ENCODE measurements at regions of chr1 and their contacts with region 1.

Region 1: DNA sequence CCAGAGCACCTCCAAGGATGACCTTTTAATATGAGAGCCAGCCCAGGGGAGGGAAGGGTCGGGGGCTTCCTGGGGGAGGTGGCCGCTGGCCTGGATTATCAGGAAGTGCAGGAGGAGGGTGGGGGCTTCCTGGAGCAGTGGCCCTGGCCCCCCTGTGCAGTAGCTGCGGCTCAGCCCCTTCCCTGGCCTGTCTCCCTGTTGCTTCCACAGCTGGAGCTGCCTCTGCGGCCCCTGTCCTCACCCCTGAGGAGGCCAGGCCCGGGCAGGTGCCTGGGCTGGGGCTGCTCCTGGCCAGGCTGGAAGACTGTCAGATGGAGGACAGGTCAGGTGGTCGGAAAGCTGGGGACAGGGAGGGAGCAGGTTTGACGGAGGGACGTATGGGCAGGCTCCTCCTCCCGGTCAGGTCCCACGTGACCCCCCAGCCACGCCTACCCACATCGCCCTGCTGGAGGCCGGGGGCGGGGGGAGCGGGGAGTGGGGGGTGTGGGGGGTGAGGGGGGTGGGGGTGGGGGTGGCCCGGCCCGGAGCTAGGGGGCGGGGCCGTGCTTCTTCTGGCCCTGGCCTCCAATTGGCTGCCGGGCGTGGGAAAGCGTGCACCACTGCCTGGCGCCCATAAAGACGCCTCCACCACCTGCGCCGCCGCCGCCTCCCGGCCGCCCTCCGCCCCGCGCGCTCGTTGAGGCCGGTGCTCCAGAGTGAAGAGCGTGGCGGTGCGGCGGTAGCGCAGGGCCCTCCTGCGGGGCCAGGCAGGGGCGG is 10.2 kb upstream of the TNFRSF14 start:
- DNase-seq: no peak
- H3K4me3 ChIP-seq: peak overlapping the region; percentile 57
- CTCF ChIP-seq: no peak

Region 2: DNA sequence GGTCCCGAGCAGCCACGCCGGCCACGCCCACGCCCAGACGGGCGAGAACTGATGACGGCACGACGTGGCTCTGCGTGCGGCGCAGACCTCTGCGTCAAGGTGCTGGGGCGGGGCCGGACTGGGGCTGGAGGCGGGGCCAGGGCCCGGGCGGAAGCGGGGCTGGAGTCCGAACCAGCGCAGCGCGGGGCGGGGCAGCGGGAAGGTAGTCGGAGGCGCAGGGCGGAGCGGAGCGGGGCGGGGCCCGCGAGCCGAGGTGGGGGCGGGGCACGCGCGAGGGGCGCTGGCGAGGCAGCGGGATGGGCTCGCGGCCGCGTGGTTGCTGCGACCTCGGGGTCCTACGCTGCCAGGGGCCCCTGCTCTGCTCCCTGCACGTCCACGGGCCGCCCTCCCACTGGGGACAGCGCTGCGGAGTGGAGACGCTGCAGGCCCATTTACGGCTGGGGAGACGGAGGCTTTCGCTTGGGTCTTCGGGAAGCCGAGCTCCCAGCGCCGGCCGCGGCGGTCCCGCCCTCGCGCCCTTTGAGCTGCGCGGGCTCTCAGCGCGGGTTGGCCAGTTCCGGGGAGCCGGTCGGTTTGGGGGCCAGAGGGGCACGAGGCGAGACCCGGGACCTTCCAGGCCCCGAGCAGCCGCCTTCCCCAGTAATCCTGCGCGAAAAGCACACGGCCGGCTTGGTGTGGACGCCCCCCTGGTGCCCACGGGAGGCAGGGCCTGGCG is 133.3 kb before region 1 on chr1 and contains the start of gene PEX10:
- CTCF ChIA-PET with region 1: interaction called, 138 read pairs
- POLR2A ChIA-PET with region 1: interaction called, 4 read pairs
- DNase-seq: peak; percentile 24
- H3K4me3 ChIP-seq: peak within 1 kb of the TSS; percentile 87
- CTCF ChIP-seq: no peak

Region 3: GRCh38 chr1:2451744-2452143 is 94.2 kb before region 1 on chr1:
- CTCF ChIA-PET with region 1: interaction called, 10 read pairs
- POLR2A ChIA-PET with region 1: no interaction called
- DNase-seq: peak; percentile 74
- H3K4me3 ChIP-seq: no peak overlapping the region; the same call in 1 of the 2 replicates
- CTCF ChIP-seq: no peak

Region 4: DNA sequence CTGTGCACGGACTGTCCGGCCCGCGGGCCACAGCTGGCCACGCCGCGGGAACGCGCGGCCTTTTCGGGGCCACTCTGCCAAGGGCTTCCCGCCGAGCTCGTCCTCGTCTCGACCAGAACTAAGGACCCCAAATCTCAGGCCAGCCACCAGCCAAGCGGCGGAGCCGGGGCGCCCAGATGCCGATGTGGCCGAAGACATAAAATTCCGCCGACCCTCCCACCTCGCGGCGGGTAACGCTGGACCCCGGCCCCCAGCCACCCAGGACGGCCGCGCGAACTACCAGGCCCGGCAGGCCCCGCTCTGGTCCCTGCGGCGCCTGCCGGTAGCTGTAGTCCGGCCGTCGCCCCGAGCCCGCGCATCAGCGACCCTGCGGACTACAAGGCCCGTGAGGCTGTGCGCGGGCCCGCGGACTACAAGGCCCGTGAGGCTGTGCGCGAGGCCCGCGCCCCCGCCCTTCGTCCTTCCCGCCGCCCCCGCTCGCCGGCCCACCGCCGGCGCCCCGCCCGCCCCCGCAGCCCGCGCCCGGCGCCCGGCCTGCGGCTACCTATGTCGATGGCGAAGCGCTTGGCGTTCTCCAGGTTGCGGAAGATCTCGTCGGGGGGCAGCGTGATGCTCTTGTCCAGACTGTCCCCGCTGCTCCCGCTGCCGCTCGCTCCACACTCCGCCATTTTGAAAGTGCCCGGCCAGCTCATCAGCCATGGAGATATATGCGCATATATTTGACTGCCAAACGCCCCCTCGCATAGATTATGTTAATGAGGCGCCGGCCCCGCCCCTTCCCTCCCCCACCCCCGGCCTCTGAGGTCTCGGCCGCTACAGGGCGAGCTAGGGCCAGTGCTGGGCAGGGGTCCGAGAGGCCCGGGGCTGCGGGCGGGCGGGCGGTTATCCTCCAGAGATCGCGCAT is 19.8 kb before region 1 on chr1 and contains the start of gene PANK4:
- CTCF ChIA-PET with region 1: interaction called, 47 read pairs
- POLR2A ChIA-PET with region 1: interaction called, 4 read pairs
- DNase-seq: peak; percentile 59
- H3K4me3 ChIP-seq: peak within 1 kb of the TSS; percentile 91
- CTCF ChIP-seq: peak; percentile 28

Region 5: GRCh38 chr1:2534687-2535441 is 11.1 kb before region 1 on chr1:
- CTCF ChIA-PET with region 1: interaction called, 47 read pairs
- POLR2A ChIA-PET with region 1: interaction called, 6 read pairs
- DNase-seq: no peak
- H3K4me3 ChIP-seq: no peak overlapping the region
- CTCF ChIP-seq: no peak

Region 6: DNA sequence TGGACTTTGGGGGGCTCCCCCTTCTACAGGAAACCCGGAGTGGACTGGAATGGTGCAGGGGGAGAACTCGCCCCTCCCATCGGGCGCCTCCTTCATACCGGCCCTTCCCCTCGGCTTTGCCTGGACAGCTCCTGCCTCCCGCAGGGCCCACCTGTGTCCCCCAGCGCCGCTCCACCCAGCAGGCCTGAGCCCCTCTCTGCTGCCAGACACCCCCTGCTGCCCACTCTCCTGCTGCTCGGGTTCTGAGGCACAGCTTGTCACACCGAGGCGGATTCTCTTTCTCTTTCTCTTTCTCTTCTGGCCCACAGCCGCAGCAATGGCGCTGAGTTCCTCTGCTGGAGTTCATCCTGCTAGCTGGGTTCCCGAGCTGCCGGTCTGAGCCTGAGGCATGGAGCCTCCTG is 10.3 kb after region 1 on chr1 and contains the start of gene TNFRSF14:
- CTCF ChIA-PET with region 1: interaction called, 45 read pairs
- POLR2A ChIA-PET with region 1: no interaction called
- DNase-seq: no peak
- H3K4me3 ChIP-seq: peak within 1 kb of the TSS; percentile 57
- CTCF ChIP-seq: peak; percentile 14

Region 7: GRCh38 chr1:2561898-2562545 is 16.1 kb after region 1 on chr1:
- CTCF ChIA-PET with region 1: interaction called, 45 read pairs
- POLR2A ChIA-PET with region 1: no interaction called
- DNase-seq: no peak
- H3K4me3 ChIP-seq: no peak overlapping the region
- CTCF ChIP-seq: no peak